ENCODE measurements at regions of chr21 and their contacts with region 1.

Region 1: DNA sequence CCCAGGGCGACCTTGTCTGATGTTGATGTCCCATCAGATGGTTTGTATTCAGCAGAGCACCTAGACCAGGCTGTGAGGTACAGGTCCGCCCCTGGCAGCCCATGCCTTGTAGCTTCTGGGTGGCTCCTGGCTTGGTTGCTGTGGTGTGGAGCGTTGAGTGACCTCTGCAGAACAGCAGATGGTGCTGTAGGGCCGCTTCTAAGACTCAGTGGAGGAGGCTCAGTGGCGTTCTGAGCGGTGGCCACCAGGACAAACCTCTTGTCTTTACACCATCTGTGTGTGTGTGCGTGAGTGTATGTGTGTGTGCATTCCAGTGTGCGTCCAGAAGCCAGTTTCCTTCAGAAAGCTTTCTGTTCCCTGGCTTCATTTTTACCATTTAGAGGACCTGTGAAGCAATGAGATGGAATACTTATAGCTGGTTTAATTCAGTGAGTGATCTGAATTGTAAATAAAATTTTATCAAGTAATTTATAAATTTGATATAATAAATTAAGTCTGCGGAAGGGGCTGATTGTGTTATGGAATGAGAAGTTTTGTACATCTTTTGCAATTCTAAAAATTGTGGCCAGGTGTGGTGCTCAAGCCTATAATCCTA is 66.1 kb downstream of the ADARB1 start:
- DNase-seq: peak; percentile 82
- ATAC-seq: peak; percentile 94
- H3K4me3 Mint-ChIP-seq: no peak overlapping the region
- H3K27ac Mint-ChIP-seq: no peak overlapping the region
- H3K4me1 Mint-ChIP-seq: peaks cover 9% of the 10 kb centered on the region
- H3K27me3 Mint-ChIP-seq: no peaks in the 10 kb centered on the region

Region 2: GRCh38 chr21:44949779-44950198 is 190.7 kb before region 1 on chr21:
- CTCF ChIA-PET with region 1: interaction called, 58 read pairs
- POLR2A ChIA-PET with region 1: no interaction called
- intact Hi-C with region 1: loop called in 1 of 2 experiments (anchors 1 kb)
- DNase-seq: peak; percentile 91
- ATAC-seq: peak; percentile 91
- H3K4me3 Mint-ChIP-seq: no peak overlapping the region
- H3K27ac Mint-ChIP-seq: no peak overlapping the region
- H3K4me1 Mint-ChIP-seq: peaks cover 8% of the 10 kb centered on the region
- H3K27me3 Mint-ChIP-seq: no peaks in the 10 kb centered on the region

Region 3: DNA sequence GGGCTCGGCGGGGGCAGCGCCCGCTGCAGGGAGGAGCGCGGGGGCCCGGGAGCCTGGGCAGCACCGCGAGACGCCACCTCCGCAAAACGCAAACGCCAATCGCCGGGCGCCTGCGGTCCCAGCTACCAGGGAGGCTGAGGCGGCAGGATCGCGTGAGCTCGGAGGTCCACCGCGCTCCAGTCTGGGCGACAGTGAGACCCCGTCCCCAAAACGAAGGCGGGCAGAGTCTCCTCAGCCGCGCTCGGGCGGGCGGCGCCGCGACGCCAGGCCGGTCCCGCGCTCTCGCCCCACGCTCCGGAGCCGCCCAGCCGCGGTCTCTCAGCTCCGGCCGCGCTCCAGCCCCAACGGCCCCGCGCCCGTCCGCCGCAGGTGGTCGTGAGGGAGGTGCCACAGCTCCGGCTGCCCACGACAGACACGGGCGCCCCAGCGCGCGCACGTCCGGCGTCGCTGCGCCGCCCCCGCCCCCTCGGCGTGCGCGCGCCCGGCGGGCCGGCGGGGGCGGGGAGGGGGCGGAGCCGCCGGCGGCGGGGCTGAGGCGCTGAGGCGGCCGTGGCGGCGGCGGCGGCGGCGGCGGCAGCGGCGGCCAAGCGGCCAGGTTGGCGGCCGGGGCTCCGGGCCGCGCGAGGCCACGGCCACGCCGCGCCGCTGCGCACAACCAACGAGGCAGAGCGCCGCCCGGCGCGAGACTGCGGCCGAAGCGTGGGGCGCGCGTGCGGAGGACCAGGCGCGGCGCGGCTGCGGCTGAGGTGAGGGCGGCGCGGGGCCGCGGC is 66.2 kb before region 1 on chr21 and contains the start of gene ADARB1:
- CTCF ChIA-PET with region 1: interaction called, 41 read pairs
- POLR2A ChIA-PET with region 1: no interaction called
- intact Hi-C with region 1: no loop called
- DNase-seq: peak; percentile 75
- ATAC-seq: peak; percentile 13
- H3K4me3 Mint-ChIP-seq: peak within 1 kb of the TSS; percentile 88
- H3K27ac Mint-ChIP-seq: peak within 1 kb of the TSS; percentile 91
- H3K4me1 Mint-ChIP-seq: peaks cover 42% of the 10 kb centered on the region
- H3K27me3 Mint-ChIP-seq: no peaks in the 10 kb centered on the region
- total RNA-seq, gene ADARB1: 32.8 to 37.7 TPM

Region 4: GRCh38 chr21:45109831-45110492 is 30.5 kb before region 1 on chr21:
- CTCF ChIA-PET with region 1: interaction called, 17 read pairs
- POLR2A ChIA-PET with region 1: no interaction called
- intact Hi-C with region 1: no loop called
- DNase-seq: peak; percentile 70
- ATAC-seq: peak; percentile 59
- H3K4me3 Mint-ChIP-seq: peak overlapping the region; percentile 62
- H3K27ac Mint-ChIP-seq: peak overlapping the region; percentile 74
- H3K4me1 Mint-ChIP-seq: peaks cover 76% of the 10 kb centered on the region
- H3K27me3 Mint-ChIP-seq: no peaks in the 10 kb centered on the region

Region 5: DNA sequence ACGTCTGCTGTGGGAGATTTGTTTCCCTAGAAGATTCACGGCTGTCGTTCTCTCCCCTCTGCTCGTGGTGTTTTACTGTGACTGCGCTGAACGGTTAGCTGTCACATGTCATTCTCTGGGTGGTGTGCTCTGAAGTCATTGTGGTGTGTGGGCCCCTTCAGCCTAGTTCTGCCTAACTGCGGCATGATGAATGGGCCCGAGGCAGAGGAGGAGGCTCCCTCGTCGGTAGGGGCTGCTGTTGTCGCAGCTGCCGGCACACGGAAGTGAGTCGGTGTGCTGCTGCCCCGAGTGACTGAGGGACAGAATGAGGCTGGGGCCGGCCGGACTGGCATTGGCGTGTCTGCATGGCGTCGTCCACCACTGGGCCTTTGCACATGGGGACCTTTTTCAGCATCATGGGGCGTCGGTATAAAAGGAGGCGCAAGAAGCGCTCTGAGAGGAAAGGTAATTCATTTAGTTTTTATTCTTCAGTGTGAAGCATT is 11.9 kb after region 1 on chr21:
- CTCF ChIA-PET with region 1: interaction called, 73 read pairs
- POLR2A ChIA-PET with region 1: no interaction called
- intact Hi-C with region 1: no loop called
- DNase-seq: peak; percentile 87
- ATAC-seq: peak; percentile 99
- H3K4me3 Mint-ChIP-seq: peak overlapping the region; percentile 63
- H3K27ac Mint-ChIP-seq: peak overlapping the region; percentile 78
- H3K4me1 Mint-ChIP-seq: peaks cover 37% of the 10 kb centered on the region
- H3K27me3 Mint-ChIP-seq: no peaks in the 10 kb centered on the region

Region 6: DNA sequence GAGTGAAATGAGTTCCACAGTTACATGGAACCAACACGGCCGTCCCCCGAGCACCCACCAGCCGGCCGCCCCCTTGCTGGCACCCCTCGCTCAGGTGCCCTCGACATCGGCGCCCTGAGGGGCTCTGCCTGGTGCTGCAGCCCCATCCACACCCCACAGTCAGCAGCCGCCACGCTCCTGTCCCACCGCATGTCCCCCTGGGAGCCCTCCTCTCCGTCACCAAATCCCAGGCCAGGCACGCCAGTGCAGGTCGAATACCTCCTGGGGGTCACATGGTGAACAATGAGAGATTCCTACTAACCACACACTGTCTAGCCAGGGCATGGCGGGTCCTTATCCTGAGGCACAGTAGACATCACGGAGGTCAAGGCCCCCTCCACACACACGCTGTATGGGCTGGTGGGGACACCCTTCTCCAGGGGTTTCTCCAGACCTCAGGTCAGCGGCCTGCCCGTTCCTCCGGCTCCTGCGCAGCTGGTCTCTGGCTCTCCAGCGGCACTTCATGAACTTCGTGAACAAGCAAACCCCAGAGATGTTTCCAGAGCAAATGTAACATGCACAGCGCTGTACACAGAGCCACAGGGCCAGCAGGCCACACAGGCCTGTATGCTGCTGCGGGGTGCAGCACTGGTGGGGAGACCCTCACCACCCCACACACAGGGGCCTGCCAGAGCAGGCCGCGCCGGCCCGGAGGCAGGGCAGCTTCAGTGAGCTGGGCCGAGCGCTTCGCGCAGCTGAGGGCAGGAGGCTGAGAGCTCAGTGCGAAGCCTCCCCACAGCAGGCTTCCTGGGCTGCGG is 125.5 kb after region 1 on chr21:
- CTCF ChIA-PET with region 1: no interaction called
- POLR2A ChIA-PET with region 1: no interaction called
- intact Hi-C with region 1: no loop called
- DNase-seq: no peak
- ATAC-seq: no peak
- H3K4me3 Mint-ChIP-seq: no peak overlapping the region
- H3K27ac Mint-ChIP-seq: no peak overlapping the region
- H3K4me1 Mint-ChIP-seq: peaks cover 16% of the 10 kb centered on the region
- H3K27me3 Mint-ChIP-seq: no peaks in the 10 kb centered on the region

Region 7: GRCh38 chr21:45590246-45590725 is 449.8 kb after region 1 on chr21:
- CTCF ChIA-PET with region 1: no interaction called
- POLR2A ChIA-PET with region 1: no interaction called
- intact Hi-C with region 1: loop called in 1 of 2 experiments (anchors 5 kb)
- DNase-seq: peak; percentile 92
- ATAC-seq: peak; percentile 60
- H3K4me3 Mint-ChIP-seq: peak overlapping the region; percentile 36
- H3K27ac Mint-ChIP-seq: no peak overlapping the region
- H3K4me1 Mint-ChIP-seq: peaks cover 16% of the 10 kb centered on the region
- H3K27me3 Mint-ChIP-seq: peaks cover 16% of the 10 kb centered on the region